Activated T-helper 1 cell treated with anti-CD3 and anti-CD28 coated beads, Interleukin-12 subunit alpha, Interleukin-12 subunit beta, Interleukin-2, Interleukin-4 antibody, amounts not matched to agents 30 ng/mL and 10 ng/mL and 1 ng/mL, durations not matched to agents 14 hours and 24 hours and 36 hours (primary cell): ENCODE measurements at regions of chr10 and their contacts with region 1.

Region 1: GRCh38 chr10:117496616-117497028 is 45.9 kb upstream of the EMX2 start:
- DNase-seq: peak; percentile 43
- H3K4me3 Mint-ChIP-seq: no peak overlapping the region
- H3K27ac Mint-ChIP-seq: no peak overlapping the region
- H3K4me1 Mint-ChIP-seq: peaks cover 7% of the 10 kb centered on the region
- H3K27me3 Mint-ChIP-seq: peaks cover 14% of the 10 kb centered on the region

Region 2: DNA sequence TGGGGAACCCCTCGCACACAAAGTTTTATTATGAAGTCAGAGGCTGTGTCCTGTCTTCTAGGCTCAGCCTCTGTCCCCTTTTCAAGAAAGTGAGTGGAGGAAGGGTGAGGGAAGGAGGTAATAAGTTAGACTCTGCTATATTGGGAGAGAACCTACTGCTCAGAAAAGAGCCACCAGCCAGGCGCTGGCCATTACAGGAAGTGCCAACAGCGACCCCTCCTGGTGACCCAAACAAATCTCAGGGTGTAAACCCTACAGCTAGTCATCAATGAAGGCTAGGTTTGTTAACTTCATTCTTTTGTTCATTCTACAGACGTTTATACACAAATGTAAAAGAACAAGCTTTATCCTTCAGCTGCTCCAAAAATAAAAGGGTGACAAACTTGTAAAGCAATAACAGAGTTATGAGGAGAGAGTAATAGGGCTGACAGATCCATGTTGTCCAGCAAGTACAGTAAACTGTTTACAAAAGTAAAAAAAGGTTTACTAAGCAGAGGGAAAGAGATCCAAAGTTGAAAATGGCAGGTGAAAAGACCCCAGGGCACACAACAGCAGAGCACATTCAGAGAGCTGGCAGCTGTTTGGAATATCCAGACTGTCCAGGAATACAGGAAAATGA is 762.8 kb after region 1 on chr10:
- intact Hi-C with region 1: loop called (anchors 1 kb)
- DNase-seq: no peak
- H3K4me3 Mint-ChIP-seq: no peak overlapping the region
- H3K27ac Mint-ChIP-seq: no peak overlapping the region
- H3K4me1 Mint-ChIP-seq: no peaks in the 10 kb centered on the region
- H3K27me3 Mint-ChIP-seq: peaks cover 23% of the 10 kb centered on the region

Region 3: DNA sequence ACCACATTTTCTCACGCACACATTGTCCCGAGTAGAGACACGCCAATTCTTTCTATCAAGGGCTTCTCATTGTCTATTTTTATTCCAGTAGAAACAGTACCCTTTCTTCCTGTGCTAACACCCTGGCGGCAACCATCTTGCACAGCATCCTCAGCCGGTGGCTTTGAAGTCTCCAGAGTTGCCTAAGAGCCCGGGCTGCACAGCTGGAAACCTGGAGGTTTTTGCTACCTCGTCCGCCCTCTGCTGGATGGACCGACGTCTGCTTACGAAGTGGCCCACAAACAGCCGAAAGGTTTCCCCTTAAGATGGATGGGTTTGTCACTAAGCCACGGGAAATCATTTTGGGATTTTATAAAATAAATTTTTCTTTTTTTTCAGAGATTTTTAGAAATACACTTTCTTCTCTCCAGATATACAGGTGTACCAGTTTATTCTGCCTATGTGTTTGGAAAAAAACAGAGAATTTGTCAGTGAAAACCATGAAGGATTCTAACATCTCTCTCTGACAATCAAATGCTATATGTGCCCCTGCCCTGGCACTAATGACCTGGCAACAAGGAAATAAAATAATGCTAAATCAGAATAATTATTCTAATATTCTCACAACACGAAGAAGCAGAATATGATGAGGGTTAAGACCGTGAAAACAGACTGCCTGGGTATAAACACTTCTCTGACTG is 927.3 kb after region 1 on chr10:
- intact Hi-C with region 1: loop called (anchors 1 kb)
- DNase-seq: peak; percentile 41
- H3K4me3 Mint-ChIP-seq: no peak overlapping the region
- H3K27ac Mint-ChIP-seq: no peak overlapping the region
- H3K4me1 Mint-ChIP-seq: no peaks in the 10 kb centered on the region
- H3K27me3 Mint-ChIP-seq: peaks cover 3% of the 10 kb centered on the region

Region 4: DNA sequence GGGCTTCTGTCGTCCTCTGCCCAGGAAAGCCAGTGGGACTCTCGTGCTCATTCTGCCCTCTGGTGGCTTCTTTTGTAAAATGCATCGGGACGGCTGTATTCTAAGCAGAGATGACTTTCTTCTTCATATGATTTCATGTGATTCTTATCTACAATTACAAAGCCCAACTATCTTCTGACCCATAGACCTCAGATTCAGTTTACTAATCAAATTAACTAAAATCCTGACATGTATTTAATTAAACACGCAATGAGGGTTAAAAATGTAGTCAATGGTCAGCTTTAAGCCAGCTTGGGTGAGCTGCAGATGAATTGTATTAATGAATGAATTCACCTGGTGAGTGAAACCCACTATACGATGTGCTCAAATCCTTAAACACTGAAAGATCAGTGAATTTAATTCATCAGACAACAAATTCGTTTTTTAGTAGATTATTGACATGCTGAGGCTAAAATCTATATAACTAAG is 963.1 kb after region 1 on chr10:
- intact Hi-C with region 1: loop called (anchors 1 kb)
- DNase-seq: peak; percentile 29
- H3K4me3 Mint-ChIP-seq: no peak overlapping the region
- H3K27ac Mint-ChIP-seq: no peak overlapping the region
- H3K4me1 Mint-ChIP-seq: peaks cover 6% of the 10 kb centered on the region
- H3K27me3 Mint-ChIP-seq: peaks cover 17% of the 10 kb centered on the region

Region 5: DNA sequence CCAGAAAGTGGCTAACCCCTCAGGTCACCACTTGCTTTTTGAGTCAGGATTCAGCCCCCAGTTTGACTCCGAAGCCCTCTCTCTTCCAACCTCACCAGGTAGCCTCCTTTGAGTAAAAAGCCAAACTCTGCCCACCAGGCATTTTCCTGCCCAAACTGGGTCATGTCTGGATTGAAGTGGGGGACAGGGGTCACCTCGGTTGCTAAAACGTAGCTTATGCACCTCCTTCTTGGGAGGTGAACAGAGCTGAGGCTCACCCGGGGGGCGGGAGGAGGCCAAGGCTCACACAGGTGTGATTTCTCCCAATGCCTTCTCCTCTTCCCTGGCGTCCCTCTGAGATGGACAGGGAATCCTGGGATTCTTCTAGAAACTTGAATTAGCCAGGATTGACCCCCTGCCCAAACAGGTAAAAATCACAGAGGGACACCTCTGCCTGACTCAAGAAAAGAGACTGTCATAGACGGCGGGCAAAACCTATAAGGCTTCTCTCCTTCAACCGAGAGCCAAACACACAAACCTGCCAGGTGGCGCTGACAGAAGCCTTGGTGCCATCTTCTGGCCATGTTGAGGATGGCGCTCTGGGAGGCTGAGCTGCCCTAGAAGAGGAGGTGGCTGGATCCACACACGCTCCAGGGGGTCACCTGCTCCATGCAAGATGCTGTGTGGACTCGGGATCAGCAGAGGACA is 1047.2 kb after region 1 on chr10:
- intact Hi-C with region 1: loop called (anchors 2 kb)
- DNase-seq: peak; percentile 35
- H3K4me3 Mint-ChIP-seq: no peak overlapping the region
- H3K27ac Mint-ChIP-seq: no peak overlapping the region
- H3K4me1 Mint-ChIP-seq: no peaks in the 10 kb centered on the region
- H3K27me3 Mint-ChIP-seq: peaks cover 20% of the 10 kb centered on the region